ENCODE measurements at regions of chr7 and their contacts with region 1.

Region 1: DNA sequence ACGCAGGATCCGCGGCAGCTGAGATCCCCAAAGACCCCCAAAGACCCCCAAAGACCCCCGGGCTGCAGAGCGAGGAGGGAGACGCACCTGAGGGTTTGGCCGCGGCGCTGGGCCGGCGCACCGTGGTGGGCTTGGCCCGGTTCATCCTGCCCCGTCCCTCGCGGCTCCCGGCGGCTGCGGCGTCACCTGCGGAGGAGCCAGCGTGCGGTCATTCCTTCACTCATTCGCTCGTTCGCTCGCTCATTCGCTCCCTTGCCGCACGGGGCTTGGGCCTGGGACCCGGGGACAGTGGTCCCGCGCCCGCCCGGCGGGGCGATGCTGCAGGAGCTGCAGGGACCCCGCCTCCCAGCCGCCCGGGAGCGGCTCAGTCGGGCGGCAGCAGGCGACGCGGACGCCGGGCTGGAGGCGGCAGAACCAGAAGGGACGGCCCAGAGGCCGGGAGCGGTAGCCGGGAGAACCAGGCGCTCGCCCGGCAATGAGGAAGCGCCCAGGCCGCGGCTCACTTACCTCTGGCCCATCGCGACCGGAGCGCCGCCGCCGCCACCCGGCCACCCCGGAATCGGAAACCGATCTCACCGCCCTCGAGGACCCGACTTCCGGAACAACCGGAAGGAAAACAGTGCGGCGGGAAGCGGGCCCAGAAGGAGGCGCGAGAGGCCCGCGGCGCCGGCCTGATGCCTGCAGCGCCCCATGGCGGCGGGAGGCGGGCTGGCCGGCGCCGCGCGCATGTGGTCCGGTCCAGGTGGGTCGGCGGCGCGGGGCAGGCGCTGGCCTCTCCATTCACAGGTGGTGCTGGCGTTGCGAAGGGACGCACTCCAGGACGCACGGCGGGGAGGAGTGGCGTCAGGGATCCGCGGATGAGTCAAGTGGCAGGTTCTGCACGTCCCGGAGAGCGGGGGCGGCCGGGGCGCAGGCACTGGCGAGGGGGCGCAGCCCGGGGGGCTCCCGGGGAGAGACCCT is at the start of gene INTS1:
- DNase-seq: peak; percentile 92 to 95 (median 93)
- ATAC-seq: peak; percentile 84
- H3K4me3 ChIP-seq: peak within 1 kb of the TSS; percentile 71 to 100
- H3K27ac ChIP-seq: peak within 1 kb of the TSS in 3 of 4 donors; percentile 75 to 91 (median 79)
- H3K4me1 ChIP-seq: peaks cover 63% of the 10 kb centered on the region
- H3K27me3 ChIP-seq: no peaks in the 10 kb centered on the region
- CTCF ChIP-seq: peak; percentile 56 to 100 (median 94)
- POLR2A ChIP-seq: peak; percentile 68 to 76 (median 75)
- total RNA-seq, gene INTS1: 66.3 to 72.9 TPM

Region 2: DNA sequence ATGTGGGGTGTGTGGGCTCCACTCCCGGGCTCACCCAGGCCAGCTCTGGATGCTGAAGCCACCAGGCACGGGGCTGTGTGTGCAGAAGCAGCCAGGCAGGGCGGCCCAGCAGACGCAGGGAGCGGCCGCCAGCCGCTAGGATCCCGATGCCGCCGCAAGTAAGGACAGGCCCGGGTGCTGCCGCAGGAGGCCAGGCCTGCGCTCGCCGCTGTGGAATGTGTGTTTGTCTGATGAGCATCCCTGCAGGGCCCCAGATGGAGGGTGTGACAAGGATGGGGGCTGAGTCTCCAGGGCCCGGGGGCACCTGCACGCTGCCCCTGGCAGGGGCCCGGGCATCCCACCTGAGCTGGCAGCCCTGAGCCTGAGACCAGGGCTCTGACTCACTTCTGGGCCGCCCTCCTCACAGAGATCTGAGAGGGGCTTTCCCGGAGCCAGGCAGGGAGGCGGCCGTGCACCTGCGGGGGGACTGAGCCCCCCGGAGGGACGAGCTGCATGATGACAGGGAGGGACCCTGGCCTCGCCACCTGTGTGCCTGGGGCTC is 1112.6 kb before region 1 on chr7:
- intact Hi-C with region 1: no loop called
- DNase-seq: peak in 1 of 4 donors; percentile 7
- ATAC-seq: no peak
- H3K4me3 ChIP-seq: no peak overlapping the region
- H3K27ac ChIP-seq: no peak overlapping the region
- H3K4me1 ChIP-seq: no peaks in the 10 kb centered on the region
- H3K27me3 ChIP-seq: no peaks in the 10 kb centered on the region
- CTCF ChIP-seq: no peak
- POLR2A ChIP-seq: no peak

Region 3: GRCh38 chr7:1321411-1322239 is 182.5 kb before region 1 on chr7:
- intact Hi-C with region 1: no loop called
- DNase-seq: no peak
- ATAC-seq: no peak
- H3K4me3 ChIP-seq: no peak overlapping the region
- H3K27ac ChIP-seq: no peak overlapping the region
- H3K4me1 ChIP-seq: no peaks in the 10 kb centered on the region
- H3K27me3 ChIP-seq: peaks cover 0 to 4% of the 10 kb centered on the region in 2 donors
- CTCF ChIP-seq: no peak
- POLR2A ChIP-seq: no peak

Region 4: GRCh38 chr7:1331561-1332488 is 172.3 kb before region 1 on chr7:
- intact Hi-C with region 1: no loop called
- DNase-seq: no peak
- ATAC-seq: no peak
- H3K4me3 ChIP-seq: no peak overlapping the region
- H3K27ac ChIP-seq: no peak overlapping the region
- H3K4me1 ChIP-seq: no peaks in the 10 kb centered on the region
- H3K27me3 ChIP-seq: peaks cover 0 to 5% of the 10 kb centered on the region in 2 donors
- CTCF ChIP-seq: no peak
- POLR2A ChIP-seq: no peak

Region 5: DNA sequence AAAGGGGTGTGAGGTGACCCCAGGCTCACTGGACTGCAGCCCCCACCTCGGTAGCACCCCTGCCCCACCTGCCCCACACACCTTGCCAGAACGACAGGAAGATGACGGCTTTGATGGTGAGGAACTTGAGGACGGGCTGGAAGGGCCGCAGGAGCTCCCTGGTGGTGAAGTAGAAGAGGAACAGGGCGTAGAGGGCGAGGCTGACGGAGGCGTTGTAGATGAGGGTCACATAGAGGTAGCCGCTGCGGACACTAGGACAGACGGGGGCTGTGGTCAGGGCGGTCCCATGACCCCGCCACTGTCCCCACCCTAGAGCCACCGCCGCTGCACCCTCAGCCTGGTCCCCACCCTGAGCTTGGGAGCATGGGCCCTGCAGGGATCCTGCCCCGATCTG is 44.3 kb after region 1 on chr7:
- intact Hi-C with region 1: loop called (anchors 5 kb)
- DNase-seq: no peak
- ATAC-seq: no peak
- H3K4me3 ChIP-seq: no peak overlapping the region
- H3K27ac ChIP-seq: no peak overlapping the region
- H3K4me1 ChIP-seq: peaks cover 21% of the 10 kb centered on the region
- H3K27me3 ChIP-seq: no peaks in the 10 kb centered on the region
- CTCF ChIP-seq: no peak
- POLR2A ChIP-seq: no peak

Measured in body of pancreas (tissue), 4 donors.